Activated B cell treated with CpG ODN at 0.5 μM for 24 hours (primary cell): ENCODE measurements at regions of chrX and their contacts with region 1.

Region 1: GRCh38 chrX:38916801-38917200 is 115.5 kb downstream of the MID1IP1 start:
- DNase-seq: no peak
- ATAC-seq: no peak
- H3K4me3 Mint-ChIP-seq: no peak overlapping the region
- H3K27ac Mint-ChIP-seq: no peak overlapping the region
- H3K4me1 Mint-ChIP-seq: no peaks in the 10 kb centered on the region
- H3K27me3 Mint-ChIP-seq: no peaks in the 10 kb centered on the region
- CTCF ChIP-seq: no peak

Region 2: DNA sequence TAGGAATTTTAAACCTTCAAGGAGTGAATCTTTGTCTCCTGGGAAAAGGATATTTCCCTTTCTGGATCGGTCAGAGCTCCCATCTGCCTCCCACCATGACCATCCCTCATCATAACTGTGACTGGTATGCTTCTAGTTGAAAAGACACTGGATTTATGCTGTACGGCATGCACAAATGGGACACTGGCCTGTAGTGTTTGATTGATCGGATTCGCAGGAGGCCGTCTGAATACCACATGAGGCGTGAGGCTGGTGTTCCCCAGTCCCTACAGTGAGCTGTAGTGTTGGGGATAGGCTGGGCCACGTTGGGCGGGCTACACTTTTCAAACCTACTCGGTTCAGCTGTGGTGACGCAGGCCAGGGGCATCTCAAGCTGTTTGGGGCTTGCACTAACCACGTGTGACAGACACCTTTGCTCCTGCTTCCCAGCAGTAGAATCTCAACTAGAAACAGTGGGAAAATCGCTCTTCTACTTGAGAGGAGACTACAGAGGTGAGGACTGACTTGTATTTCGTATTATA is 13.8 kb before region 1 on chrX:
- CTCF ChIA-PET with region 1: no interaction called
- POLR2A ChIA-PET with region 1: interaction called, 12 read pairs
- intact Hi-C with region 1: no loop called
- DNase-seq: no peak
- ATAC-seq: no peak
- H3K4me3 Mint-ChIP-seq: no peak overlapping the region
- H3K27ac Mint-ChIP-seq: no peak overlapping the region
- H3K4me1 Mint-ChIP-seq: peaks cover 8% of the 10 kb centered on the region
- H3K27me3 Mint-ChIP-seq: no peaks in the 10 kb centered on the region
- CTCF ChIP-seq: no peak